ENCODE measurements at regions of chr11 and their contacts with region 1.

Region 1: GRCh38 chr11:18802381-18803257 is 11.0 kb upstream of the PTPN5 start:
- DNase-seq: peak in 3 of 5 donors; percentile 31 to 49 (median 35)
- ATAC-seq: peak in 1 of 4 donors; percentile 33
- H3K4me3 ChIP-seq: no peak overlapping the region
- H3K27ac ChIP-seq: no peak overlapping the region
- H3K4me1 ChIP-seq: no peaks in the 10 kb centered on the region
- H3K27me3 ChIP-seq: peaks cover 0 to 5% (median 0%) of the 10 kb centered on the region in 9 donors
- CTCF ChIP-seq: peak; percentile 22 to 70 (median 55)
- POLR2A ChIP-seq: no peak

Region 2: DNA sequence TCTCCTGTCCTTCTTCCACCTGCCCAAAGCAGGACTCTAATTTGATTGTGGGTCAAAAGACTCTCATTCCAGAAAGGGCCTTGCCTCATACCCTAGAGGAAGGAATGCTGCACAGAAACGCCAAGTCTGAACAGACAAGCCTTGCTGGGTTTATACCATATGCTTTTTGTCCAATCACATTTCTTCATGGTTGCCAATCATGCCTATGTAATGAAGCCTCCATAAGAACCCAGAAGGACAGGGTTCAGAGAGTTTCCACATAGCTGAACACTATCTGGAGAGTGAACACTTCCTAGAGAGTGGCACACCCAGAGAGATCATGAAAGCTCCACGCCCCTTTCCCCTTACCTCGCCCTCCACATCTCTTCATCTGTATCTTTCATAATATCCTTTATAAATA is 549.4 kb before region 1 on chr11:
- intact Hi-C with region 1: no loop called
- DNase-seq: no peak
- ATAC-seq: no peak
- H3K4me3 ChIP-seq: no peak overlapping the region
- H3K27ac ChIP-seq: no peak overlapping the region
- H3K4me1 ChIP-seq: no peaks in the 10 kb centered on the region
- H3K27me3 ChIP-seq: peaks cover 0 to 6% (median 0%) of the 10 kb centered on the region in 9 donors
- CTCF ChIP-seq: no peak
- POLR2A ChIP-seq: no peak

Region 3: GRCh38 chr11:18775492-18776292 is 26.9 kb before region 1 on chr11:
- intact Hi-C with region 1: loop called in 3 of 10 experiments (anchors 2 kb)
- DNase-seq: peak; percentile 41 to 68 (median 55)
- ATAC-seq: peak in 3 of 4 donors; percentile 25 to 38 (median 34)
- H3K4me3 ChIP-seq: no peak overlapping the region
- H3K27ac ChIP-seq: no peak overlapping the region
- H3K4me1 ChIP-seq: peaks cover 0 to 14% (median under 1%) of the 10 kb centered on the region in 12 donors
- H3K27me3 ChIP-seq: no peaks in the 10 kb centered on the region
- CTCF ChIP-seq: peak; percentile 39 to 72 (median 63)
- POLR2A ChIP-seq: no peak